ENCODE measurements at regions of chr19 and their contacts with region 1.

Region 1: DNA sequence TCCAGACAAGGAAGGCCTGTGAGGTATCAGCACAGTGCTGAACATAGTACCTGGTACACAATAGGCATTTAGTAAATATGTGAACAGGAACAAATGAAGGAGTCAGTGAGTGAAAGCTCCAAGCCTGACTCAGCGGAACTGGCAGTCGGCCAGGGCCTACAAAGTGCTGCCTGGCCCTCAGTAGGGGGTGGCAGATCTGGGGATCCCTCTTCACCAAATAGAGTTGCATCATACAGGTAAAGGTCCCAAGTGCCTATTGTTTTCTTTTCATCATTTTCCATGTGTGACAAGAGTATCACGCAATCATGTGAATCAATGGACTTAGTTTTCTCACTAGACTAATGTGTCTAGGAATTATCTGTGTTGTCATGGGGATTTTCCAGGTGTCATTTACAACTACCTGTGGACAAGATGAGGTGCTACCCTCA is 9.2 kb downstream of the CYP2B6 start:
- DNase-seq: no peak
- H3K4me3 ChIP-seq: no peak overlapping the region
- H3K27ac ChIP-seq: no peak overlapping the region
- H3K4me1 ChIP-seq: no peaks in the 10 kb centered on the region
- H3K27me3 ChIP-seq: no peaks in the 10 kb centered on the region
- CTCF ChIP-seq: no peak
- POLR2A ChIP-seq: no peak

Region 2: GRCh38 chr19:40982594-40983101 is 17.7 kb before region 1 on chr19:
- CTCF ChIA-PET with region 1: no interaction called
- POLR2A ChIA-PET with region 1: no interaction called
- dilution Hi-C with region 1: no loop called
- intact Hi-C with region 1: no loop called
- DNase-seq: no peak
- H3K4me3 ChIP-seq: no peak overlapping the region
- H3K27ac ChIP-seq: no peak overlapping the region
- H3K4me1 ChIP-seq: no peaks in the 10 kb centered on the region
- H3K27me3 ChIP-seq: peaks cover 0 to 11% of the 10 kb centered on the region in 2 experiments
- CTCF ChIP-seq: no peak
- POLR2A ChIP-seq: no peak

Region 3: DNA sequence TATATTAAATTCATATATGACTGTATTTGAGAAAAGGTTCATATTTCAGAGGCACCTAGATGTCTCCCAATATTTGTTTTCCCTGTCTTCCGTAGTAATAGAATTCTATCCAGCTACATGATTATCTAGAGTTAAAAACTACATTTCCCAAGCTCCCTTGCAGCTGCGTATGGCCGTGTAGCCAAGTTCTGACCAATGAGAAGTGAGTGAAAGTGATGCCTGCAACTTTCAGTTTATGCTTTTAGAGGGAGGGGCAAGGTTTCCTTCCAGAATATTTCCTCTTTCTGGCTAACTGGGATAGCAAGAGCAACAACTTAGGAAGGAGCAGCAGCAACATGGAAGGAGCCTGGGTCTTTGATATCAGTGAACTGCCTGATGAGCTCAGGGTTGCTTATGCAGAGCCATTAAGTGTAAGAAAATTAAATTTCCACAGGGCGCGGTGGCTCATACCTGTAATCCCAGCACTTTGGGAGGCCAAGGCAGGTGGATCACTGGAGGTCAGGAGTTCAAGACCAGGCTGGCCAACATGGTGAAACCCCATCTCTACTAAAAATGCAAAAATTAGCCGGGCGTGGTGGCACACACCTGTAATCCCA is 64.7 kb after region 1 on chr19:
- CTCF ChIA-PET with region 1: no interaction called
- POLR2A ChIA-PET with region 1: no interaction called
- dilution Hi-C with region 1: no loop called
- intact Hi-C with region 1: no loop called
- DNase-seq: peak; percentile 32
- H3K4me3 ChIP-seq: no peak overlapping the region
- H3K27ac ChIP-seq: no peak overlapping the region
- H3K4me1 ChIP-seq: no peaks in the 10 kb centered on the region
- H3K27me3 ChIP-seq: peaks cover 0 to 3% of the 10 kb centered on the region in 2 experiments
- CTCF ChIP-seq: no peak
- POLR2A ChIP-seq: no peak

Region 4: GRCh38 chr19:41089955-41090354 is 89.6 kb after region 1 on chr19:
- CTCF ChIA-PET with region 1: no interaction called
- POLR2A ChIA-PET with region 1: interaction called, 11 read pairs
- dilution Hi-C with region 1: no loop called
- intact Hi-C with region 1: no loop called
- DNase-seq: no peak
- H3K4me3 ChIP-seq: no peak overlapping the region
- H3K27ac ChIP-seq: no peak overlapping the region
- H3K4me1 ChIP-seq: no peaks in the 10 kb centered on the region
- H3K27me3 ChIP-seq: peaks cover 2 to 6% of the 10 kb centered on the region in 2 experiments
- CTCF ChIP-seq: no peak
- POLR2A ChIP-seq: no peak

Measured in endothelial cell of umbilical vein (primary cell).